GM23248 (cell line): ENCODE measurements at regions of chr18 and their contacts with region 1.

Region 1: GRCh38 chr18:62590799-62591590 is 68.2 kb downstream of the ZCCHC2 start:
- DNase-seq: no peak
- H3K4me3 ChIP-seq: no peak overlapping the region
- H3K27ac ChIP-seq: no peak overlapping the region
- H3K4me1 ChIP-seq: peaks cover 3% of the 10 kb centered on the region; the same call in 1 of the 2 replicates
- H3K27me3 ChIP-seq: no peaks in the 10 kb centered on the region

Region 2: GRCh38 chr18:61459896-61460648 is 1130.9 kb before region 1 on chr18:
- in situ Hi-C with region 1: no loop called
- DNase-seq: no peak
- H3K4me3 ChIP-seq: no peak overlapping the region
- H3K27ac ChIP-seq: no peak overlapping the region
- H3K4me1 ChIP-seq: no peaks in the 10 kb centered on the region
- H3K27me3 ChIP-seq: no peaks in the 10 kb centered on the region

Region 3: DNA sequence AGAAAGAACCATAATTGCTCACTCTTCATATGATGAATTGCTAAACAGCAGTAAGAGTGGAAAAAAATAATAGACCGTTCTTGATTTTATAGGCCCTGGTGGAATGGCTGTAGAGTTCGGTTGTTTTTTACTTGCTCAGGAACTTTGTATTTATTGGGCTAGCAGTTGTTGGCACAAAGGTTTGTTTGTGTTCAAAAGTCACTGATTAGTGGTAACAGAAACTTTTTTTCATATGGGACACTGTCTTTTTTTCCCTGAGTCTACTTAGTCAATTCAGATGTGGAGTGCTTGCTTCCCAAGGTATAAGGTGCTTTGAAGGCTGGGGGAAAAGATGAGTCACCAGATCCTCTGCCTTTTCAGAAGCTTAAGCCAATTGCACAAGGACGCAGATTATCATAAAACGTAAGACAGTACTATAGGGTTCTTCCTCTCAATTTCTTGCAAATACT is 150.1 kb after region 1 on chr18:
- in situ Hi-C with region 1: no loop called
- DNase-seq: peak; percentile 61
- H3K4me3 ChIP-seq: no peak overlapping the region
- H3K27ac ChIP-seq: no peak overlapping the region
- H3K4me1 ChIP-seq: peaks cover 14% of the 10 kb centered on the region
- H3K27me3 ChIP-seq: no peaks in the 10 kb centered on the region

Region 4: GRCh38 chr18:62982600-62983251 is 391.7 kb after region 1 on chr18:
- in situ Hi-C with region 1: loop called (anchors 5 kb)
- DNase-seq: peak; percentile 57
- H3K4me3 ChIP-seq: peak overlapping the region; percentile 49
- H3K27ac ChIP-seq: no peak overlapping the region
- H3K4me1 ChIP-seq: peaks cover 3% of the 10 kb centered on the region; the same call in 1 of the 2 replicates
- H3K27me3 ChIP-seq: no peaks in the 10 kb centered on the region